WTC11 (cell line): ENCODE measurements at regions of chr11 and their contacts with region 1.

Region 1: DNA sequence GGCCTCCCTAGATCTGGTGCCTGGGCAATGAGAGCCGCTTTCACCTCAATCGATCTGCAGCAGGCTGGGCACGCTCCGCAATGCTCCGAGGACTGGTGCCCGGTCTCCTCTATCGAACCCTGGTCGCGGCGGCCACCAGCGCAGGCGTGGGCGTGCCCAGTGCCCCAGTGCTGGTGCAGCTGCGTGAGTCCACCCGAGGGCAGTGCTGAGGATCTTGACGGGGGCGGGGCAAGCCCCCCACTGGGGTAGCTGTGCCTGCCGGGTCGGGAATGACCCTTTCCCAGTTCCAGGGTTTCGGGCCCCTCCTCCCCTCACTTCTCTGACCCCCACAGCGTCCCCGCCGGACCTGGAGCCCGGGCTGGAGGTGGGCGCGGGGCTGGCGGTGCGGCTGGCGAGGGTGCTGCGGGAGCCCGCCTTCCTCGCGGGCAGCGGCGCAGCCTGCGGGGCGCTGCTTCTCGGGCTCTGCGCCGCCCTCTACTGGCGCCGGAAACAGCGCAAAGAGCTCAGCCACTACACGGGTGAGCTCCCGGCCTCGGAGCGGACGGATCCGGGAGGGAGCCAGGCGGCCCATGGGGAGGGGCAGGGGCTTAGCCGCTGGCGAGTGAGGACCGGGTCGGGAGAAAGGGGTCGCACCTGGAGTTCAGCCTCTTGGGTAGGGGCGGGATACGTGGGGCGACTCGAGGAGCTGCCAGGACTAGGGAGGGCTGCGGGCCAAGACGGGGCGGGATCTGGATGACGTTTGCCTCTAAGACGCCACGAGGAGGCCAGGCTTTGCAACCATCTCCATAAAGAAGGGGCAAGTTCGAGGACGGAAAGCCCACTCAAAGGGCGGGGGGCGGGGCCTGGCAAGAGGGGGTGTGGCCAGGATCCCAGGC is 10.9 kb downstream of the ROBO3 start:
- DNase-seq: peak; percentile 89
- ATAC-seq: peak; percentile 83
- H3K4me3 Mint-ChIP-seq: peak overlapping the region; percentile 75
- H3K27ac Mint-ChIP-seq: peak overlapping the region; percentile 74; the same call in 1 of the 2 replicates
- H3K4me1 Mint-ChIP-seq: peaks cover 22% of the 10 kb centered on the region
- H3K27me3 Mint-ChIP-seq: peaks cover 63% of the 10 kb centered on the region
- CTCF ChIP-seq: peak; percentile 50

Region 2: DNA sequence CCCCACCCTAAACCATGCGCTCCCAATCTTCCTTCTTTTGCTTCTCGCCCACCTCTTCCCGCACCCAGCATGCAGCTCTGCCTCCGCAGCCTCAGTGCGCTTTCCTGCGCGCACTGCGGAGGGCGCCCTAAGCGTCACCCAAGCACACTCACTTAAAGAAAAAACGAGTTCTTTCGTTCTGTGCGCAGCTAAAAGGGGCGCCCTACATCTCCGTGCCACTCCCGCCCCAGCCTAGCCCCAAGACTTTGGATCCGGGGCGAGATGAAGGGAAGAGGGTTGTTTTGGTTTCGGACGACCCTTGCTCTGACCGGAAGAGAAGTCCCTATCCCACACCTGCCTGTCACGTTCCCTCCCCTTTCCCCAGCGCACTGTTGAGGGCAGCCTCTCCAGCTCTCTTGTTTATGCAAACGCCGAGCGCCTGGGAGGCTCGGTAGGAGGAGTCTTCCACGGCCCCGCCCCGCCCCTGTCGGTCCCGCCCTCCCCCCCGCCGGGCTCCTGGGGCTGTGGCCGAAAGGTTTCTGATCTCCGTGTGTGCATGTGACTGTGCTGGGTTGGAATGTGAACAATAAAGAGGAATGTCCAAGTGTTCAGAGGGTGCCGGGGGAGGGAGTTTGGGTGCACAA is 129.4 kb before region 1 on chr11:
- CTCF ChIA-PET with region 1: interaction called, 20 read pairs
- POLR2A ChIA-PET with region 1: no interaction called
- DNase-seq: peak; percentile 90
- ATAC-seq: peak; percentile 83
- H3K4me3 Mint-ChIP-seq: peak overlapping the region; percentile 89
- H3K27ac Mint-ChIP-seq: no peak overlapping the region
- H3K4me1 Mint-ChIP-seq: peaks cover 38% of the 10 kb centered on the region
- H3K27me3 Mint-ChIP-seq: peaks cover 100% of the 10 kb centered on the region
- CTCF ChIP-seq: peak; percentile 34; the same call in 1 of the 2 replicates

Region 3: DNA sequence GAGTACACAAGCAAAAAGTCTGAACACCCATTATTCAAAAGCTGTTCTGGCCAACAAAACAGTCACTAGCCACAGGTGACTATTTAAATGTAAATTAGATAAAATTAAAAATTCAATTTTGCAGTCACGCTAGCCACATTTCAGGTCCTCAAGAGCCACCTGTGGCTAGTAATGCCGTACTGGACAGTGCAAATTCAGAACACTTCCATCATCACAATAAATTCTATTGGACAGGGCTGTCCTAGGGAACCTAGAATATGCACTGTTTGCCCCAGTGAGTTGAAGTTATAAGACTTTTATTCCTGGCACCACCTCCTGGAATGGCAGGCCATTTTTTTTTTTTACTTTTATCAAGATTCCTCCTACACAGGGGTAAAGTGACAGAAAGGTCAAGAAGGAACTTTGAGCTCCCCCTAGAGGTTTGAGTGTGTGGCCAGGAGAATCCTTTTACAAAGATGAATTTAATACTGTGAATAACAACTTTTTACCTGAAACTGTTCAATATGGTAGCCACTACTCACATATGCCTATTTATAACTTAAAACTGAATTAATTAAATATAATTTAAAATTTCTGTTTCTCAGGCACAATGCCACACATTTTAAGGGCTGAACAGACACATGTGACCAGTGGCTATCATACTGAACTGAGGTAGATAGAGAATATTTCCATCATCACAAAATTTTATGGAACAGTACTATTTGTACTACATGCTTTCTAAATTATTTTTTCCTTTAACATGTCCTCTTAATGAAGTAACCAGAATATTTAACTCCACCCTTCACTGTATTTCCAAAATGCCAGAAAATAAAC is 82.5 kb before region 1 on chr11:
- CTCF ChIA-PET with region 1: interaction called, 11 read pairs
- POLR2A ChIA-PET with region 1: no interaction called
- DNase-seq: peak; percentile 25
- ATAC-seq: peak; percentile 82
- H3K4me3 Mint-ChIP-seq: peak overlapping the region; percentile 50
- H3K27ac Mint-ChIP-seq: peak overlapping the region; percentile 22; the same call in 1 of the 2 replicates
- H3K4me1 Mint-ChIP-seq: peaks cover 76% of the 10 kb centered on the region
- H3K27me3 Mint-ChIP-seq: no peaks in the 10 kb centered on the region
- CTCF ChIP-seq: peak; percentile 51

Region 4: DNA sequence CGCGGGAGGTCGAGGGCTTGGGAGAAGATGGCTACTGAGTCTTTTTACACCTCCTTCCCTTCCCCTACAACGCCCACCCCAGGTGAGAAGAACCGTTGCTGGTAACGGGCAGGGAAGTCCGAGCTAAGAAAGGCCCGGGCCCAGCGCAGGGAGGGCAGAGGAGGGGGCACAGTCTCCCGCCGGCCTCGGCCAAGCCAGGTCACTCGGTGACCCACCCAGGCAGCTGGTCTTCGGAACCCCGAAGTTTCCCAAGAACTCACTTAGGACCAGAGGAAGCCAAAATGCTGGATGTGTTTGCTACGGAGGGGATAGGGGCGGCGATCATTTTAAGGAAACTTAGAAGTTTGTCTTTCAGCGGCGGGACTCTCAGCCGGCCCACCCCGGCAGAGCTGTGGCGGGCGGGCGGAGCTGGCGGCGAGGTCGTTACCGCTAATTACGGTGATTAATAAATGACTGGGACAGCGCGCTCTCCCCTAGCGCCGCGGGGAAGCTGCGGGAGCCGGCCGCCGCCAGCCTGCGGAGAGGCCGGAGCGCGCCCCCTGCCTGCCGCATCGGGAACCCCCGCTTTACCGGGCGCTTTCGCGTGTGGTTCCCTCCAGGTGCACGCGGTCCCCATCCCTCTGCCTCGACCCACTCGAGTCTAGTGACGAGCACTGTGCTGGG is 10.1 kb before region 1 on chr11:
- CTCF ChIA-PET with region 1: interaction called, 40 read pairs
- POLR2A ChIA-PET with region 1: interaction called, 5 read pairs
- DNase-seq: peak; percentile 76
- ATAC-seq: peak; percentile 10; the same call in 1 of the 2 replicates
- H3K4me3 Mint-ChIP-seq: peak overlapping the region; percentile 60
- H3K27ac Mint-ChIP-seq: no peak overlapping the region
- H3K4me1 Mint-ChIP-seq: peaks cover 40% of the 10 kb centered on the region
- H3K27me3 Mint-ChIP-seq: peaks cover 100% of the 10 kb centered on the region
- CTCF ChIP-seq: peak; percentile 87

Region 5: GRCh38 chr11:124900464-124900863 is 24.3 kb after region 1 on chr11:
- CTCF ChIA-PET with region 1: interaction called, 30 read pairs
- POLR2A ChIA-PET with region 1: no interaction called
- DNase-seq: no peak
- ATAC-seq: peak; percentile 18; the same call in 1 of the 2 replicates
- H3K4me3 Mint-ChIP-seq: no peak overlapping the region
- H3K27ac Mint-ChIP-seq: no peak overlapping the region
- H3K4me1 Mint-ChIP-seq: peaks cover 25% of the 10 kb centered on the region
- H3K27me3 Mint-ChIP-seq: peaks cover 24% of the 10 kb centered on the region
- CTCF ChIP-seq: no peak

Region 6: DNA sequence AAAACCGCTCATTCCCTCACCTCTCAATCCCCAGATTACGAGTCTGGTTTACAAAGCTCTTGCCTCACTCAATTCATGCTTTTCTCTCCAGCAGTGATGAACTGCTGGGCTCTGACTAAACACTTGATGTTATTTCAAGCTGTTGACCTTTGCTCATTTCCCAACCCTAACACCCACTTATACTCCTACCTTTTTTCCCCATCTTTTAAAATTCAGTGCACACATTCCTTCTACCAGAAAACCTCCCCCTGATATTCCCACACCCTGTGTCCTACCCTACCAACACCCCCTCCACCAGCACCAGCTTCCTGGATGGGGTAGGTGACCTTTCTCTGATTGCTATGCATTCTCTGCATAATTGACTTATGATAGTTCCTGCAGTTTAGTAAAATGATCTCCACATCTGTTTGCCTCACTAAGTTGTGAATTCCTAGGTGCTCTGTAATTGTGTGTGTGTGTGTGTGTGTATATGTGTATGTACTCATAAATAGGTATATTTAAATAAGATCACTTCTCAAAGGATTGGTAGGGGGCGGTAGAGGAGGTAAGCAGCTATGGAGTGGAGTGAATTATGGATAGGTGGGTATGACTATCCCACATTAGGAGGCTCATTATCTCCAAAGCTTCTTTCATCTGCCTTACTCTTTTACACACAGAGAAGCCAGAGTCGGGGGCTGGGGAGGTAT is 58.8 kb after region 1 on chr11:
- CTCF ChIA-PET with region 1: interaction called, 15 read pairs
- POLR2A ChIA-PET with region 1: interaction called, 4 read pairs
- DNase-seq: no peak
- ATAC-seq: peak; percentile 34; the same call in 1 of the 2 replicates
- H3K4me3 Mint-ChIP-seq: no peak overlapping the region
- H3K27ac Mint-ChIP-seq: no peak overlapping the region
- H3K4me1 Mint-ChIP-seq: 0 out of 2 replicates have a peak, but pooled peaks cover 2% of the 10 kb centered on the region
- H3K27me3 Mint-ChIP-seq: peaks cover 33% of the 10 kb centered on the region
- CTCF ChIP-seq: no peak

Region 7: GRCh38 chr11:125070699-125071254 is 194.6 kb after region 1 on chr11:
- CTCF ChIA-PET with region 1: no interaction called
- POLR2A ChIA-PET with region 1: no interaction called
- DNase-seq: no peak
- ATAC-seq: no peak
- H3K4me3 Mint-ChIP-seq: no peak overlapping the region
- H3K27ac Mint-ChIP-seq: no peak overlapping the region
- H3K4me1 Mint-ChIP-seq: peaks cover 16% of the 10 kb centered on the region
- H3K27me3 Mint-ChIP-seq: peaks cover 7% of the 10 kb centered on the region
- CTCF ChIP-seq: no peak